Left lung (tissue), 14 donors: ENCODE measurements at regions of chr1 and their contacts with region 1.

Region 1: DNA sequence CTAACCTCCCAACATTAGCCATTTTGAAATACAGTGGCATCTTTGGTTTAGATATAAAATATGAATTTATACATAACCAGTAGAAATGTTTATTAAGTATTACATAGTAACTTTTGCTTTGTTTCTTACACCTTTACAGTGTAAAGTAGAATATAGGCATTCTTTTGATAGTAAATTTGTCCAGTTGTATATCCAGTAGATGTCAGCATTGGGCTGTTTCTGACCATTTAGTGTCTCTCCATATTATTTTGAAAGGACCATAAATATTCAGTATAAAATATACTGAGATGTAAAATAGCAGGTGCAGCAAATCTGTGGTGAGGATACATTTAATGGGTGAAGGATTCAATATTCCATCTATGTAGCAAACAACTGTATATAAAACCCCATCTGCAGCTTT is 115.8 kb upstream of the ZRANB2 start:
- DNase-seq: peak in 1 of 4 donors; percentile 37
- ATAC-seq: peak; percentile 87
- H3K4me3 ChIP-seq: no peak overlapping the region
- H3K27ac ChIP-seq: no peak overlapping the region
- H3K4me1 ChIP-seq: no peaks in the 10 kb centered on the region
- H3K27me3 ChIP-seq: no peaks in the 10 kb centered on the region
- CTCF ChIP-seq: peak in 1 of 2 donors; percentile 36

Region 2: GRCh38 chr1:71106658-71107322 is 89.9 kb before region 1 on chr1:
- intact Hi-C with region 1: no loop called
- DNase-seq: no peak
- ATAC-seq: no peak
- H3K4me3 ChIP-seq: no peak overlapping the region
- H3K27ac ChIP-seq: no peak overlapping the region
- H3K4me1 ChIP-seq: no peaks in the 10 kb centered on the region
- H3K27me3 ChIP-seq: no peaks in the 10 kb centered on the region
- CTCF ChIP-seq: no peak

Region 3: GRCh38 chr1:71521655-71522264 is 325.1 kb after region 1 on chr1:
- intact Hi-C with region 1: loop called in 1 of 2 experiments (anchors 10 kb)
- DNase-seq: peak in 2 of 4 donors; percentile 36 to 51
- ATAC-seq: peak; percentile 93
- H3K4me3 ChIP-seq: no peak overlapping the region
- H3K27ac ChIP-seq: no peak overlapping the region
- H3K4me1 ChIP-seq: no peaks in the 10 kb centered on the region
- H3K27me3 ChIP-seq: no peaks in the 10 kb centered on the region
- CTCF ChIP-seq: peak; percentile 40 to 51